ENCODE measurements at regions of chr1 and their contacts with region 1.

Region 1: DNA sequence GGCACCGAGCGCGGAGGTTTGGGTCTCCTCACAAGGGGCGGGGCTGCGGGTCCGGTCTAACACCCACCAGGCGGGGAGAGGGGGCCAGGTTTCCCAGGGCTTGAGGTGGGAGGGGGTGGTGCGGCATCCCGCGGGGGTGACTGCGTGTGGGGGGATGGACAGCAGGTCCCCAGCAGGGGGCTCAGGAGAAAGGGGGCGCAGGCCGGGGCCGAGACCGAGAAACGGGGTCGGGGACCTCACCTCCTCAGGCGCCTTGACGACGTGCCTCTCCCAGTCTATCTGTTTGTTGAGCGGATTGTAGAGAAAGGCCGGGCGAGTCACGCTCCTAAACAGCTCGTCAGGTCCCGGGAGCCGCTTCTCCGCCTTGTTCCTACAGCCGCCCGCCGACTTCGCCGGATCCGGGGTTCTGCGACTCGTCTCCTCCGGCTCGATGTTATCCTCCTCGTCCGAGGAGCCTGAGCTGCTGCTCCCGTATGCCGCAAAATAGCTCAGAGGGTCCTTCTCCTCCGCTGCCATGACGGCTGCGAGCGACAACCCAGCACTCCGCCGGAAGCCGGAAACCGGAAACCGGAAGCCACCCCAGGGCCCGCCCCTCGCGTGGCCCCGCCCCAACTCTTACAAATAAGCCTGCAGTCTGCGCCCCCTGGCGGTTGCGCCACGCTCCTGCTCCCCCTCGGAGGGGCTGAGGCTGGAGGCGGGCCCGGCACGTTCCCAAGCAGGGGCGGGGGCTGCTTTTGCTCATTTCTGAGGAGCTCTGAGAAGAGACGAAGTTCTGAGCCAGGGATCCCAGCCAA is at the start of gene C1orf52:
- DNase-seq: peak; percentile 90
- CTCF ChIP-seq: peak; percentile 98

Region 2: GRCh38 chr1:84959294-84959693 is 300.0 kb before region 1 on chr1:
- in situ Hi-C with region 1: loop called (anchors 10 kb)
- DNase-seq: no peak
- CTCF ChIP-seq: no peak

Region 3: DNA sequence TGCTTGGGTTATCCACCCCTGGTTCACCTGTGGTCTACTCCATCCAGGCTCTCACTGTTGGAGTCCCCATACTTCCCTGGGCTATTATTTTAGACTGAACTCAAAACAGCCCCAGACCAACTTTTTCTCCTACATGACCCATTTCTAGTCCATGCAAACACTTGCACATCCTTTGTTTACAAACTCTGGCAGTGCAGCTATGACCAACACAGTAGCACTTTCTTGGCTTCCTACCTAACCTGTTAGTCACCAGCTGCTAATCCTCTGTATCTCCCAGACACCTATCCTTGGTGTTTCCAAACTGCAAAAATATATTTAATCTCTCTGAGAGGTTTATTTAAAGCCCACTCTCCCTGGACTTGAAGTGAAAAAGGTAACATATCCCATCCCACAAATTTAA is 114.8 kb after region 1 on chr1:
- in situ Hi-C with region 1: no loop called
- DNase-seq: no peak
- CTCF ChIP-seq: no peak

Region 4: GRCh38 chr1:85550784-85551516 is 291.6 kb after region 1 on chr1:
- in situ Hi-C with region 1: no loop called
- DNase-seq: no peak
- CTCF ChIP-seq: no peak

Measured in GM13977 (cell line).